ENCODE measurements at regions of chr19 and their contacts with region 1.

Region 1: GRCh38 chr19:46728693-46729676 is 12.1 kb upstream of the PRKD2 start:
- DNase-seq: peak; percentile 82 to 93
- ATAC-seq: peak; percentile 83
- H3K4me3 ChIP-seq: no peak overlapping the region
- H3K27ac ChIP-seq: no peak overlapping the region
- H3K4me1 ChIP-seq: no peaks in the 10 kb centered on the region
- H3K27me3 ChIP-seq: no peaks in the 10 kb centered on the region

Region 2: GRCh38 chr19:46659151-46660007 is 69.6 kb before region 1 on chr19:
- intact Hi-C with region 1: no loop called
- DNase-seq: peak; percentile 72 to 88
- ATAC-seq: no peak
- H3K4me3 ChIP-seq: peak overlapping the region; percentile 51 to 75
- H3K27ac ChIP-seq: peak overlapping the region; percentile 59 to 93
- H3K4me1 ChIP-seq: no peaks in the 10 kb centered on the region
- H3K27me3 ChIP-seq: no peaks in the 10 kb centered on the region

Region 3: GRCh38 chr19:46692918-46693722 is 35.9 kb before region 1 on chr19:
- intact Hi-C with region 1: no loop called
- DNase-seq: no peak
- ATAC-seq: no peak
- H3K4me3 ChIP-seq: no peak overlapping the region
- H3K27ac ChIP-seq: no peak overlapping the region
- H3K4me1 ChIP-seq: no peaks in the 10 kb centered on the region
- H3K27me3 ChIP-seq: no peaks in the 10 kb centered on the region

Region 4: GRCh38 chr19:46704379-46705076 is 24.5 kb before region 1 on chr19:
- intact Hi-C with region 1: loop called in 1 of 2 experiments (anchors 2 kb)
- DNase-seq: peak; percentile 81 to 95
- ATAC-seq: peak; percentile 83
- H3K4me3 ChIP-seq: no peak overlapping the region
- H3K27ac ChIP-seq: no peak overlapping the region
- H3K4me1 ChIP-seq: no peaks in the 10 kb centered on the region
- H3K27me3 ChIP-seq: no peaks in the 10 kb centered on the region